Gastrocnemius medialis (tissue), 4 donors: ENCODE measurements at regions of chr3 and their contacts with region 1.

Region 1: DNA sequence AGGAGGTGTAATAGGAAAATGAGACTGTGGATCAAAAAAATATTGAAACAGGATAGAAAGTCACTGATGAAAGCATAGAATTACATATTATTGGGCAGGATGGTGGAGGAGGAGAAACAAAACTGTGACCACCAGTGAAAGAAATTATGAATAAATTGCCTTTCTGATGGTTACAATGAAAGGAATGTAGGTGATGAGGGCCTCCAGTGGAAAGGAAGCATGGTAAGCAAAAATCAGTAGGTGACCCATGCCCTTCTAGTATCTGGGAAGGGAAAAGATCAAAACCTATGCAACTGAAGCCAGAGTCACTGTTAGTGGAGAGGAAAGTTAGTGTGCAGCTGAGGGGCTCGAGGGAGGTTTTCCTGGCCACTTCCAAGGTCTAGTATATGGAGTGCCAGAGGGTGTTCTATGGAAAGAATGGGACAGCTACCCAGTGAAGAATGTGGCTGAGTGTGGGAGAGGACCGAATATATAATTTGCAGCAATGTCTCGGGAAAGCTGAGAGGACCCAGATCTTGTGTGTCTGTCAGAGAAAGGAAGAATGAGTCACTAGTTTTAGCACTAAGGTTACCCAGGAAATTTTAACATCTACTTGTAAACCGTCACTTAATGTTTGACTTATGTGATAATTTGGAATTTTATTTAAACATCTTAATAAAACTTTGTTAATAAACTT is 146.2 kb downstream of the NFKBIZ start:
- DNase-seq: no peak
- ATAC-seq: no peak
- H3K4me3 ChIP-seq: no peak overlapping the region
- H3K27ac ChIP-seq: no peak overlapping the region
- H3K4me1 ChIP-seq: no peaks in the 10 kb centered on the region
- H3K27me3 ChIP-seq: no peaks in the 10 kb centered on the region
- CTCF ChIP-seq: no peak
- POLR2A ChIP-seq: no peak

Region 2: GRCh38 chr3:101809178-101810021 is 186.1 kb before region 1 on chr3:
- in situ Hi-C with region 1: no loop called
- intact Hi-C with region 1: loop called (anchors 10 kb)
- DNase-seq: no peak
- ATAC-seq: peak; percentile 40 to 44
- H3K4me3 ChIP-seq: no peak overlapping the region
- H3K27ac ChIP-seq: peak overlapping the region in 1 of 4 donors; percentile 7
- H3K4me1 ChIP-seq: peaks cover 14 to 44% of the 10 kb centered on the region in 2 donors
- H3K27me3 ChIP-seq: no peaks in the 10 kb centered on the region
- CTCF ChIP-seq: peak; percentile 60 to 73 (median 61)
- POLR2A ChIP-seq: no peak